Activated CD4-positive, alpha-beta T cell treated with anti-CD3 and anti-CD28 coated beads for 36 hours (primary cell): ENCODE measurements at regions of chr16 and their contacts with region 1.

Region 1: DNA sequence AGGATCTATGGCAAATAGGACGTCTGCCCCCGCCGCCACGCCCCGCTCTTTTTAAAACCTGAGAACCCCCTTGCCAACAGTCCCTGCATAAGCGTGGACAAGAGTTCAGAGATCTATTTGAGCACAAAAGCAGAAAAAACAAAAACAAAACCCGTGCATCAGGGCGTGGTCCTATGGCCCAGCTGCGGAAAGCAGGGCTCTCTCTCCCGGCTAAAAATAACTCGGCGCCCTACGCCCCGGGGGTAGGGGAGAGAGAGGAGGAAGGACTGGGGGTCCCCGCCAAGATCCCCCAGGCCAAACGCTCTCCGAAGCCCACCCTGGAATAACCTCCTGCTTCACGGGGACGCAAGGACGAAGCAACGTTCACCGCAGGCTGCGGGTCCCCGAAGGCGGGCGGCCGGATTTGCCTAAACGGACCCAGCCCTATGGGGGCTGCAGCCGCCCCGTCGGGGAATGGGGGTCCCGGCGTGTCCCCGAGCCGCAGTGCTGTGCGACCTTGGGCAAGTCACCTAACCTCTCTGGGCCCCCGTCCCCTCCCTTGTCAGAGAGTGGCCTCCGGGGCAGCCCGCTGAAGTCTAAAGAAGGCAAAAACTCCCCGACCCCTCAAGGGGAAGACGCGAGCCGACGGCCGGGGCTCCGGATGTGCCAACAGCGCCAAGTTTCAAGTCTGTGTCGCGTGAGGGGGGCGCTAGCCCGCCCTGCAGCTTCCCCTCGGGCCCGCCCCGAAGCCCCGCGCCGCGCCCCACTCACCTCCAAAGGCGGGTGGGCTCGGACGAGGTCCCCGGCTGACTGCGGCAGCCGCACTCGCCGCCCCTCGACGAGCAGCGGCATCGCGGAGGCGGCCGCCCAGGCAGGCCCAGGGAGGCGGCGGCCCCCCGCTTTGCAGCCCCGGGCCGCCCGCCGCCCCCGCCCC is 477 bp downstream of the NTAN1 start:
- DNase-seq: peak; percentile 73
- ATAC-seq: peak; percentile 51
- H3K4me3 Mint-ChIP-seq: peak overlapping the region; percentile 82
- H3K27ac Mint-ChIP-seq: peak overlapping the region; percentile 72
- H3K4me1 Mint-ChIP-seq: peaks cover 19% of the 10 kb centered on the region
- H3K27me3 Mint-ChIP-seq: no peaks in the 10 kb centered on the region

Region 2: GRCh38 chr16:15073101-15073500 is 17.7 kb after region 1 on chr16:
- CTCF ChIA-PET with region 1: interaction called, 39 read pairs
- POLR2A ChIA-PET with region 1: interaction called, 4 read pairs
- intact Hi-C with region 1: no loop called
- DNase-seq: no peak
- ATAC-seq: no peak
- H3K4me3 Mint-ChIP-seq: no peak overlapping the region
- H3K27ac Mint-ChIP-seq: no peak overlapping the region
- H3K4me1 Mint-ChIP-seq: peaks cover 5% of the 10 kb centered on the region
- H3K27me3 Mint-ChIP-seq: no peaks in the 10 kb centered on the region

Region 3: DNA sequence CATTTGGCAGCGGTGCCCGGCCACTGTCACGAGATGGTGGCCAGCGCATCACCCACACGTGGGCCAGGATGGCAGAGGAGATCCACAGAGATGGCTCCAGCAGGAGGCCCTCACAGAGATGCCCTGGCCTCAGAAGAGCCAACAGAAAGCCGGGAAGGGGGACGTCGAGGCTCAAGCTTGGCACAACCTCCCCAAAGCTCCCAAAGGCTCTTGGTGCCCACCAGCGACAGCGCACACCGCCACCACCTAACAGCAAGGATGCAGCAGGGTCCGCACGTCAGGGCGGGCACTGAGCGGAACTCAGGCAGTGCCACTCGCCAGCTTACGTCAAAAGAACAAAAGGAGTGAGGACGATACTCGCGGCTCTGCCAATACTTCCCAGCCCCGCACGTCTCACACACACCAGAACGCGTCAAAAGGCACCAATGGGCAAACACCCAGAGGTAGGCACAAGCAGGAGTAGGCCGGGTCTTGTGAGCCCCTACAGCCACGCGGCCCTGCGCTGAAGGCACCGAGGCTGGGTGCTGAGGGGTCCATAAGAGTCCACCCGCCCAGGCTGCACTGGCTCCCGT is 90.8 kb after region 1 on chr16:
- CTCF ChIA-PET with region 1: no interaction called
- POLR2A ChIA-PET with region 1: no interaction called
- intact Hi-C with region 1: loop called in 1 of 2 experiments (anchors 10 kb)
- DNase-seq: no peak
- ATAC-seq: no peak
- H3K4me3 Mint-ChIP-seq: no peak overlapping the region
- H3K27ac Mint-ChIP-seq: no peak overlapping the region
- H3K4me1 Mint-ChIP-seq: peaks cover 11% of the 10 kb centered on the region
- H3K27me3 Mint-ChIP-seq: no peaks in the 10 kb centered on the region

Region 4: GRCh38 chr16:16945207-16945606 is 1889.8 kb after region 1 on chr16:
- CTCF ChIA-PET with region 1: no interaction called
- POLR2A ChIA-PET with region 1: no interaction called
- intact Hi-C with region 1: no loop called
- DNase-seq: no peak
- ATAC-seq: no peak
- H3K4me3 Mint-ChIP-seq: no peak overlapping the region
- H3K27ac Mint-ChIP-seq: no peak overlapping the region
- H3K4me1 Mint-ChIP-seq: no peaks in the 10 kb centered on the region
- H3K27me3 Mint-ChIP-seq: peaks cover 4% of the 10 kb centered on the region